ENCODE measurements at regions of chr10 and their contacts with region 1.

Region 1: DNA sequence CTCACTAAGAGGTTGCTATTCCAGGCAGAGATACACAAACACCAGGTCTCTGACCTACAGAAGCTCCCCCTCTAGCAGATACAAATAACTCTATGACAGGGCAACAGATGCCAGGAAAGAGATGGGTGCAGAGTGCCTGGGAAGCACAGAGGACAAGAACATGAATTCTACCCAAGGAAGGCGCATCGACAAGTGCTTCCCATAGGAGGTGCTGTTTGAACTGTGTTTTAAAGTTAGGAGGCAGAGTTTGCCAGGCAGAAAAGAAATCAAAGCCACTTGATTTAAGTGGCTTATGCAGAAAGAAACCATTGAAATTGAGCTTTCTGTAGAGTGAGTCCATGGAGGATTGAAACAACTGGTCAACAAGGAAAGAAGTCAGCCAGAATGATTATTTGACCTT is 35.3 kb upstream of the EGR2 start:
- DNase-seq: peak; percentile 39
- H3K4me3 ChIP-seq: no peak overlapping the region
- H3K27ac ChIP-seq: no peak overlapping the region
- H3K4me1 ChIP-seq: peaks cover 20% of the 10 kb centered on the region
- CTCF ChIP-seq: peak; percentile 77

Region 2: DNA sequence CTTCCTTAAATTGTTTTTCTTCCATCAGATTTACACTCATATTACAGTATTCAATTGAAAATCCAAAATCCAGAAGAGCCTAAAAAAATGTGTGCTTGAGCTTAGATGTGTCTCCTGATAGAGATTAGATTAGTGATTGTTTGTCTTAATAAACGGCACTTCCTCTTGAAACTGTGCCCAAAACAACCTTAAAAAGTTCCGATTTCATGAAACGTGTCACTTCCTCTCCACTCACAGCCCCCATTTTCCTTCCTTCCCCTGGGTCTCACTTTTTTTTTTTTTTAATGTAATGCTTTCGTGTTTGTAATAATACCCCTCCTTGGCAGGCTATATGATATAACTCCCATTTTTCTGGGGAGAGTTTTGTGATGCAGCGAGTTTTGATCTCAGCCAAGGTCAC is 161.7 kb before region 1 on chr10:
- CTCF ChIA-PET with region 1: no interaction called
- POLR2A ChIA-PET with region 1: interaction called, 10 read pairs
- intact Hi-C with region 1: no loop called
- DNase-seq: peak; percentile 65
- H3K4me3 ChIP-seq: peak overlapping the region; percentile 28
- H3K27ac ChIP-seq: no peak overlapping the region
- H3K4me1 ChIP-seq: peaks cover 31% of the 10 kb centered on the region
- CTCF ChIP-seq: no peak

Region 3: GRCh38 chr10:62726142-62726541 is 125.3 kb before region 1 on chr10:
- CTCF ChIA-PET with region 1: no interaction called
- POLR2A ChIA-PET with region 1: no interaction called
- intact Hi-C with region 1: no loop called
- DNase-seq: no peak
- H3K4me3 ChIP-seq: no peak overlapping the region
- H3K27ac ChIP-seq: no peak overlapping the region
- H3K4me1 ChIP-seq: no peaks in the 10 kb centered on the region
- CTCF ChIP-seq: no peak

Region 4: GRCh38 chr10:62961951-62962523 is 110.6 kb after region 1 on chr10:
- CTCF ChIA-PET with region 1: no interaction called
- POLR2A ChIA-PET with region 1: no interaction called
- intact Hi-C with region 1: no loop called
- DNase-seq: peak; percentile 3
- H3K4me3 ChIP-seq: no peak overlapping the region
- H3K27ac ChIP-seq: no peak overlapping the region
- H3K4me1 ChIP-seq: no peaks in the 10 kb centered on the region
- CTCF ChIP-seq: no peak

Measured in OCI-LY7 (cell line).